ENCODE measurements at regions of chr9 and their contacts with region 1.

Region 1: GRCh38 chr9:37913480-37914153 is 9.7 kb upstream of the SLC25A51 start:
- DNase-seq: peak; percentile 86
- ATAC-seq: peak; percentile 86
- H3K4me3 Mint-ChIP-seq: no peak overlapping the region
- H3K27ac Mint-ChIP-seq: no peak overlapping the region
- H3K4me1 Mint-ChIP-seq: peaks cover 2% of the 10 kb centered on the region
- H3K27me3 Mint-ChIP-seq: no peaks in the 10 kb centered on the region

Region 2: GRCh38 chr9:38068866-38069629 is 155.4 kb after region 1 on chr9 and contains the start of gene SHB:
- CTCF ChIA-PET with region 1: interaction called, 12 read pairs
- DNase-seq: peak; percentile 80
- ATAC-seq: peak; percentile 83
- H3K4me3 Mint-ChIP-seq: peak within 1 kb of the TSS; percentile 68
- H3K27ac Mint-ChIP-seq: peak within 1 kb of the TSS; percentile 37
- H3K4me1 Mint-ChIP-seq: peaks cover 14% of the 10 kb centered on the region
- H3K27me3 Mint-ChIP-seq: peaks cover 34% of the 10 kb centered on the region
- total RNA-seq, gene SHB: 0.23 to 1.1 TPM

Region 3: DNA sequence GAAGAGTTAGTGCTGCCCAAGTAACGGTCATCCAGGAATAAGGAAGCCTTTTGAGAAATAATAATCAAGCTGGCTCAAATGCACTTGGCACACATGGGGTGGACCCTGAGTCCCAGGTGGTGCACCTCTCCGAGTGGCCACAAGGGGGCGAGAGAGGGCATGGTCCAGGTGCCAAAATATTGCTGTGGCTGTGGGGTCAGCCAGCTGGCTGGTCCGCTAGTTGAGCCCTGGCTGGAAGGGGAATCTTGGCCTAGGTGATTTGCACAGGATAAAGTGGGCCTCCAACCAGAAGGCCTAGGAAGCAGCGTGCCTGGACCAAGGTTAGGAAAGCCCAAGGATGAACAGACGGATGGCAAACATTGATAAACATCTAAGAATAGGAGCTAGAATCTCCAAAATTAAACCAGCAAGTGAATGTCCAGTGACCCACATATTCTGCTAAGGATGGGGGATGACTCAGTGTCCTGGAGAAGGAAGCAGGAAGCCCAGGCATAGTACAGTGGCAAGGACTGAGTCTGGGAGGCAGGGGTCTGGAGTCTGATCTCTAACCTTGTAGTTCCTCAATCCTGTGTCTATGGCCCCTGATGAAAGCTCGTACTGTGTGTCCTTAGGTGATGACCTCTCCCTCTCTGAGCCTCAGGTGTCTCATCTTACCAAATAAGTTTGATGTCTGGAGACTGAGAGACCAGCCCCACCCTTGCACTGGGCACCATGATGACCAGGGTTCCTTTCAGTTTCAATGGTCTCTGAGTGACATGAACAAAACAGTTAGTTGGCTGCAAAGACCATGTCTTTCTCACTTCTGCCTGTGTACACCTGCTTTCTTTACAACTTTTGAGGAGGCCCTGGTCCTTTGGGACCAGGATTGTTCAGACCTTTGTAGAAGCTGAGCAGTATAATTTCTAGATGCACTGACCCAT is 174.6 kb after region 1 on chr9:
- CTCF ChIA-PET with region 1: interaction called, 51 read pairs
- DNase-seq: peak; percentile 76
- ATAC-seq: peak; percentile 55
- H3K4me3 Mint-ChIP-seq: no peak overlapping the region
- H3K27ac Mint-ChIP-seq: no peak overlapping the region
- H3K4me1 Mint-ChIP-seq: no peaks in the 10 kb centered on the region
- H3K27me3 Mint-ChIP-seq: peaks cover 42% of the 10 kb centered on the region

Region 4: GRCh38 chr9:38160613-38161215 is 247.1 kb after region 1 on chr9:
- CTCF ChIA-PET with region 1: interaction called, 38 read pairs
- DNase-seq: peak; percentile 66
- ATAC-seq: no peak
- H3K4me3 Mint-ChIP-seq: no peak overlapping the region
- H3K27ac Mint-ChIP-seq: no peak overlapping the region
- H3K4me1 Mint-ChIP-seq: peaks cover 1% of the 10 kb centered on the region
- H3K27me3 Mint-ChIP-seq: peaks cover 6% of the 10 kb centered on the region

Measured in activated CD8-positive, alpha-beta memory T cell treated with anti-CD3 and anti-CD28 coated beads, Interleukin-2, amount 10 ng/mL, durations not matched to agents 7 days and 5 days (primary cell).